ENCODE measurements at regions of chr12 and their contacts with region 1.

Region 1: DNA sequence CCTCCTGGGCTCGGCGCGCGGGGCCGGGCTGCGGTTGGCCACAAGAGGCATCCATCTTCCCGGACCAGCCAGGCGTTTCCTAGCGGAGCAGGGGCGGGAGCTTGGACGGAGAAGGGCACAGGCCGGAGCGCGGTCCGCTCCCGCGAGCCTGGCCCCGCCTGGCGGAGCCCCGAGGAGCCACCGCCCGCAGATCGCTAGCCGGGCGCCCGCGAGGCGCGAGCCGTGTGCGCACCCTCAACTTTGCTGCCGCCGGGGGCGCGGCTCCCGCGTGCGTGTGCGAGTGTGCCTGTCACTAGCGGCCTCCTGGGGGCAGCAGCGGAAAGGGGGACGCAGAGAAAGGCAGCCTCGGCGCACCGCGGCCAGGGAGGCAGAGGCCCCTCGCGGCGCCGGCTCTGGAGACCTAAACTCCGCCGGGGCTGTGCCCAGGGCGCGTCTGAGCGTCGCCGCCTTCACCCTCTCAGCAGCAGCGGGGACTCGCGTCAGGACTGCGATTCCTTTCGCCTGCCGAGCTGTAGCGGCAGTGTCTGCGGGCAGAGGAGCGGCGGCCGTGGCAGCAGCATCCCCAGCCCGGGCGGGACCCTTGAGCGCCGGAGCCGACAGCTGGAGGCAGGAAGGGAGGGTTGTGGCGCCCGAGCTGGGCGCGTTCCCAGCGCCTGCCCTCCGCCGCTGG is 644 bp upstream of the SRGAP1 start:
- DNase-seq: peak; percentile 89
- H3K4me3 ChIP-seq: peak overlapping the region; percentile 70 to 83 (median 80)
- H3K27ac ChIP-seq: peak overlapping the region; percentile 62
- H3K4me1 ChIP-seq: peaks cover 12% of the 10 kb centered on the region
- H3K27me3 ChIP-seq: no peaks in the 10 kb centered on the region
- CTCF ChIP-seq: peak; percentile 70 to 94

Region 2: DNA sequence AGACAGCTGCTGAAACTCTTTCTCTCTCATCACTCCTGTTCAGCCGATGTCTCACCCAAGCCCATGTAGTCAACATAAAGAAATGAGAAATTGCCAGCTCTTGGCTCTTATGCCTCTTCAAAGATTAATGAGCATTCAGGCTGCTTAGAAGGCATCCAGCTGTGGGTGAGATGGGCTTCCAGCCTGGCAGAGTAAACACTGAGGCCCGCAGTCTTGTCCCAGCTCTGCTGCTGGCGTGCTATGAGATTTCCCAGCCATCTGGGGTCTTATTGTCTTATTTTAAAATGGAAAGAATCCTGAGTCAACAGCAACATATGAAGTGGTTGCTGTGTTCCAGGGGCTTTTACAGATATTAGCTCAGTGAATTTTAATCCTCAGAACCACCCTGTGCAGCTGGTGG is 51.5 kb before region 1 on chr12:
- CTCF ChIA-PET with region 1: no interaction called
- dilution Hi-C with region 1: no loop called
- in situ Hi-C with region 1: no loop called
- intact Hi-C with region 1: no loop called
- DNase-seq: no peak
- H3K4me3 ChIP-seq: no peak overlapping the region
- H3K27ac ChIP-seq: no peak overlapping the region
- H3K4me1 ChIP-seq: no peaks in the 10 kb centered on the region
- H3K27me3 ChIP-seq: no peaks in the 10 kb centered on the region
- CTCF ChIP-seq: no peak

Region 3: DNA sequence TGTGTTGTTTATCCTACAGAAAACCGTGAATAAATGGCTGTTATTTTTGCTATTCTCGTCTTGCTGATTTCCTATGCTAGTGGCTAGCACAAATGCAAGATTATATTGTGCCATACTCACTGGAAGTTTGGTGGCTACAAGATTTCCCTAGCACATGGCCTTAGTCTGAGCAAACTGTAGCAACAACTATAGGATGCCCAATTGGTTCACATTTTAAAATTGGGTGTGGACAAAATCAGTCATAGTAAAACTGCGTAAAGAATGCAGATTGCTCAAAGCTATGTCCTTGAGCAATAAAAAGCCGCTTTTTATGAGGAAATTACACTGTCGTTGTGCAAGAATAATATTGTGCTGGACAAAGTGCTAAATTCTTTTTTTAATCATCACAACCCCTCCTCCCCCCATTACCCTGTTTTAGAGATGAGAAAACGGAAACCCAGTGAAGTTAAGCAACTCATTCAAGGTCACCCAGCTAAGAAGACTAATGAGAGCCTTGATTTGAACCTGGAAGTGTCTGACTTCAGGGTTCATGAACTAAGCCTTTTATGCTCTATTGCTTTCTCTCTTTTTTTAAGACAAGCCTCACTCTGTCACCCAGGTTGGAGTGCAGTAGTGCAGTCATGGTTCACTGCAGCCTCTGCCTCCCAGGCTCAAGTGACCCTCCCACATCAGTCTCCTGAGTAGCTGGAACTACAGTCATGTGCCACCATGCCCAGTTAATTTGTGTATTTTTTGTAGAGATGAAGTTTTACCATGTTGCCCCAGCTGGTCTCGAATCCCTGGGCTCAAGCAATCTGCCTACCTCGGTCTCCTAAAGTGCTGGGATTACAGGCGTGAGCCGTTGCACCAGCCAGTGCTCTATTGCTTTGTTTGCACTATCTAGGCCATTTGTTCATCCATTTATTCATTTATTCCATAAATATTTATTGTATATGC is 74.3 kb after region 1 on chr12:
- CTCF ChIA-PET with region 1: interaction called, 5 read pairs
- dilution Hi-C with region 1: no loop called
- in situ Hi-C with region 1: no loop called
- intact Hi-C with region 1: loop called (anchors 1 kb)
- DNase-seq: peak; percentile 95
- H3K4me3 ChIP-seq: no peak overlapping the region
- H3K27ac ChIP-seq: peak overlapping the region; percentile 98
- H3K4me1 ChIP-seq: peaks cover 76% of the 10 kb centered on the region
- H3K27me3 ChIP-seq: no peaks in the 10 kb centered on the region
- CTCF ChIP-seq: no peak

Region 4: GRCh38 chr12:64039281-64039871 is 195.5 kb after region 1 on chr12:
- CTCF ChIA-PET with region 1: no interaction called
- dilution Hi-C with region 1: no loop called
- in situ Hi-C with region 1: no loop called
- intact Hi-C with region 1: loop called (anchors 5 kb)
- DNase-seq: peak; percentile 52
- H3K4me3 ChIP-seq: peak overlapping the region in 1 of 3 experiments; percentile 23
- H3K27ac ChIP-seq: peak overlapping the region; percentile 7
- H3K4me1 ChIP-seq: peaks cover 12% of the 10 kb centered on the region
- H3K27me3 ChIP-seq: no peaks in the 10 kb centered on the region
- CTCF ChIP-seq: peak in 1 of 2 donors; percentile 6

Region 5: DNA sequence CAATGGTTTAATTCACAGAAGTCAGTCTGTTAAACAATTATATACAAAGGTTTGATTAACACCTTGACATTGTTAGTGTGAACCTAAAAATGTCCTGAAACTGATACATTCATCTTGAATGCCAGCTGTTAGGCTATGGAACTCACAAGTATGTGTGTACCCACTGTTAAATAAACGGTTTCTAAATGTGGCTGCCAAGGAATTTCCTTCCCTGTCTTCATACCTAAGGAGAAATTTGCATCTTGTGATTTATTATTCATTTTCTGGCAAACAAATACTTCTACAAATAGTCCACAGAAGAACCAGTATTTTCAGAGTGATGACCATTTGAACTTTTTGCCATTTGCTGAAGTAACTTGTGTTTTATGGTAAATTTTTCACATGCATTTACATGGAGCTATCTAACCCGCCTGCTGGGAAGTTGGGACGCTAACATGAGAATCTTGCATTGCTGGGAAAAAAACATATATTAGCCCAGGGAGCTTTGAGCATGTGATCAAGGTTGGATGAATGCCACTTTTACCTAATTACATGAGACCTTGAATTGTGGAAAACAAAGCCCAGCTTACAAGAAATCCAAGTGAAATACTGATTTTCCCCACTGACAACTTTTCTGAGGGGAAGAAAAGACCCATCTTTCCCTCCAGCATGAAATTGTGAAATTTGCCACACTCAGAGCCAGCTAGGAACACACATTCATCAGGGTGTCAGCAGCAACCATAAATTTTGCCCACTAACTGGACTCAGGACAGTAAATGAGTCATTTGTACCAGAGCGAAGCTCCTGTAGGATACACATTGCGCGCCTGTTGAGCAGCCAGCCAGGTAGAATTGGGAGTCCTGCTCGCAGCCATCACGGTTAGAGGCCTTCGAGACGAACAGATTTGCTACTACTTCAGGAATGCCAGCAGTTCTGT is 260.2 kb after region 1 on chr12:
- CTCF ChIA-PET with region 1: no interaction called
- dilution Hi-C with region 1: no loop called
- in situ Hi-C with region 1: loop called in 1 of 2 experiments (anchors 25 kb)
- intact Hi-C with region 1: loop called (anchors 1 kb)
- DNase-seq: peak; percentile 93
- H3K4me3 ChIP-seq: no peak overlapping the region
- H3K27ac ChIP-seq: peak overlapping the region; percentile 73
- H3K4me1 ChIP-seq: peaks cover 56% of the 10 kb centered on the region
- H3K27me3 ChIP-seq: no peaks in the 10 kb centered on the region
- CTCF ChIP-seq: no peak

Region 6: DNA sequence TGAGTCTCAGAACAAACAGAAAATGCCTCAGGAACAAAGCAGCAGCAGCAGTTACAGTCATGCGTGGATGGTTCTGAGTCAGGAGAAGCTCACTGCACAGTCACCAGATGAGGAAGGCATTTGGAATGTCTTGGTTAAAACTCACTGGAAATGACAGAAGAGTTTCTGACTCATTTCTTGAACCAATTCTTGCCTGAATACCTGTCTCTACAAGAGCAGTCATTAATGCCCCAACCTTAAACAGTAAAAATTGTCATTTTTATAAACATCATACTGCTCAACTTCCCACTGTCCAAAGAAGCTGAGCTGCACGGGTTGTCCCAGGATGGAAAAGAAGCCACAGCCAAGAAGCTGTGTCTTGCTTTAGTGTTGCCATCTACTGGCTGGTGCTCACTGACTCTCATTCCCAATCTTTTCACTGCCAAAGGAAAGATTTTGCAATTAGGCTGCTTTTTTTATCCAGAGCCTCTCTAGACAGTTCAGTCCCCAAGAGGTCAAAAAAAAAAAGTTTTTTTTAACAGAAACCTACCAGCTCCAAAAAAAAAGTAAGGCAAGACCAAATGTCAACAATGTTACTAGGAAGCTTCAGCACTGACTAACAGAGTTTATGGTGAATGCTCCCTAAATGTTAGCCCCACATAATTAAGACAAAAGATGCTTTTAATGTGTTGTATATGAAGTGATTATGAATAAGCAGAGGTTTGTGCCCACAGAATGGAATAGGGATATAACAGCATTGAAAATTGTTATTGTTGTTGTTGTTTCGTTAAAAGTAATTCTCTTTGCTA is 337.8 kb after region 1 on chr12:
- CTCF ChIA-PET with region 1: no interaction called
- dilution Hi-C with region 1: no loop called
- in situ Hi-C with region 1: no loop called
- intact Hi-C with region 1: loop called (anchors 1 kb)
- DNase-seq: peak; percentile 98
- H3K4me3 ChIP-seq: no peak overlapping the region
- H3K27ac ChIP-seq: peak overlapping the region; percentile 83
- H3K4me1 ChIP-seq: peaks cover 41% of the 10 kb centered on the region
- H3K27me3 ChIP-seq: no peaks in the 10 kb centered on the region
- CTCF ChIP-seq: peak; percentile 59 to 69

Region 7: GRCh38 chr12:64236549-64236948 is 392.7 kb after region 1 on chr12:
- CTCF ChIA-PET with region 1: no interaction called
- dilution Hi-C with region 1: no loop called
- in situ Hi-C with region 1: loop called in 1 of 2 experiments (anchors 5 kb)
- intact Hi-C with region 1: loop called (anchors 1 kb)
- DNase-seq: no peak
- H3K4me3 ChIP-seq: no peak overlapping the region
- H3K27ac ChIP-seq: no peak overlapping the region
- H3K4me1 ChIP-seq: no peaks in the 10 kb centered on the region
- H3K27me3 ChIP-seq: no peaks in the 10 kb centered on the region
- CTCF ChIP-seq: peak in 1 of 2 donors; percentile 43

Region 8: DNA sequence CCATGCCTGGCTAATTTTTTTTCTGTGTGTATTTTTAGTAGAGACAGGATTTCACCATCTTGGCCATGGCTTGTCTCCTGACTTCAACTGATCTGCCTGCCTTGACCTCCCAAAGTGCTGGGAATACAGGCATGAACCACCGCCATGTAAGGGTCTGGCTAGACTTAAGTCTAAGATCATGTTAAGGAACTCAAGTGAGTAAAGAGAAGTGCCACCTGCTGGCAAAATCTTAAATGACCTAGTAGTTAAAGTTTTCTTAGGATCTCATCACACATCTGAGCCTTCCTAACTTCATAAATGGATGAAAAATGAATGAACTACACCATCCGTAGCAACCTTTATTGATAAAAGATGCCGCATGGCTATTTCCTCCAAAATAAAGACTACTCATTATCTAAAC is 548.4 kb after region 1 on chr12:
- CTCF ChIA-PET with region 1: no interaction called
- dilution Hi-C with region 1: no loop called
- in situ Hi-C with region 1: loop called in 1 of 2 experiments (anchors 10 kb)
- intact Hi-C with region 1: no loop called
- DNase-seq: peak; percentile 30
- H3K4me3 ChIP-seq: no peak overlapping the region
- H3K27ac ChIP-seq: no peak overlapping the region
- H3K4me1 ChIP-seq: peaks cover 9% of the 10 kb centered on the region
- H3K27me3 ChIP-seq: no peaks in the 10 kb centered on the region
- CTCF ChIP-seq: peak; percentile 46 to 57